ENCODE measurements at regions of chr14 and their contacts with region 1.

Region 1: DNA sequence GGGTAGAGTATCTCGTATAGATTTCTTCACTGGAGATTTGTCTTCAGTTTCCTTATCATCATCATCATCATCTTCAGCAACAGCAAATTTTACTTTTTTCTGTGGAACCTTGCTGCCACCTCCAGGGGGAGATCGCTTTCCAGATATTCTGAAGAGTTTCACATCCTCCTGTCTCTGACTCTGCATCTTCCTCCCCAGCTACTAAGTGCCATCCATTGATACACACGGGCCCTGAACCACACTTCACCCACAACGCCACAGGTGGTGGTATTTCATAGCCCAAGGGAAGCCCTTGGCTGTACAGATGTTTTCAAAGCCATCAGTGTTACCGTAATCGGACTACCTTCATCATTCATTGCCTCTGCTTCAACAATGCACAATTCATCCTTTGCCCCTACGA is 82.2 kb downstream of the PPP2R5C start:
- DNase-seq: peak; percentile 68
- H3K4me3 Mint-ChIP-seq: no peak overlapping the region
- H3K27ac Mint-ChIP-seq: peak overlapping the region; percentile 76
- H3K4me1 Mint-ChIP-seq: peaks cover 85% of the 10 kb centered on the region
- H3K27me3 Mint-ChIP-seq: no peaks in the 10 kb centered on the region

Region 2: GRCh38 chr14:101854366-101854765 is 10.7 kb after region 1 on chr14:
- CTCF ChIA-PET with region 1: interaction called, 10 read pairs
- POLR2A ChIA-PET with region 1: no interaction called
- DNase-seq: peak; percentile 37
- H3K4me3 Mint-ChIP-seq: no peak overlapping the region
- H3K27ac Mint-ChIP-seq: peak overlapping the region; percentile 51
- H3K4me1 Mint-ChIP-seq: peaks cover 79% of the 10 kb centered on the region
- H3K27me3 Mint-ChIP-seq: no peaks in the 10 kb centered on the region